Psoas muscle (tissue), 8 donors: ENCODE measurements at regions of chr7 and their contacts with region 1.

Region 1: DNA sequence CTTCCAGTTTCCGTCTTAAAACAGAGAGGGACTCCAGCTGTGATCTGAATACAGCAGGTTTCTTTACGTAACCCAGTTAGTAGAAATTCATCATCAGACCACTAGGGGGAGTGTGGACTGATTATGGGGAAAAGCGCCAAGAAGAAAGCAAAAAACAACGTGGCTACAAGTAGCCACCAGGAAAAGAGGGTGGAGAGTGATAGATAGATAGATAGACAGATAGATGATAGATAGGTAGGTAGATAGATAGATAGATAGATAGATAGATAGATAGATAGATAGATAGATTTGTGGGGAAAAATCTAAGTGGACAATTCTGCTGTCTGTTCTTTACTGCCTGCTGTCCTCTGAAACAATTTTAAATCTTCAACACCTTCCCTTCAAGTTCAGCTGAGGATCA is 12.7 kb upstream of the AKR1B10 start:
- DNase-seq: no peak
- ATAC-seq: peak; percentile 62 to 77 (median 66)
- H3K4me3 ChIP-seq: no peak overlapping the region
- H3K27ac ChIP-seq: peak overlapping the region; percentile 84
- H3K4me1 ChIP-seq: peaks cover 17% of the 10 kb centered on the region
- H3K27me3 ChIP-seq: no peaks in the 10 kb centered on the region
- CTCF ChIP-seq: peak; percentile 84

Region 2: DNA sequence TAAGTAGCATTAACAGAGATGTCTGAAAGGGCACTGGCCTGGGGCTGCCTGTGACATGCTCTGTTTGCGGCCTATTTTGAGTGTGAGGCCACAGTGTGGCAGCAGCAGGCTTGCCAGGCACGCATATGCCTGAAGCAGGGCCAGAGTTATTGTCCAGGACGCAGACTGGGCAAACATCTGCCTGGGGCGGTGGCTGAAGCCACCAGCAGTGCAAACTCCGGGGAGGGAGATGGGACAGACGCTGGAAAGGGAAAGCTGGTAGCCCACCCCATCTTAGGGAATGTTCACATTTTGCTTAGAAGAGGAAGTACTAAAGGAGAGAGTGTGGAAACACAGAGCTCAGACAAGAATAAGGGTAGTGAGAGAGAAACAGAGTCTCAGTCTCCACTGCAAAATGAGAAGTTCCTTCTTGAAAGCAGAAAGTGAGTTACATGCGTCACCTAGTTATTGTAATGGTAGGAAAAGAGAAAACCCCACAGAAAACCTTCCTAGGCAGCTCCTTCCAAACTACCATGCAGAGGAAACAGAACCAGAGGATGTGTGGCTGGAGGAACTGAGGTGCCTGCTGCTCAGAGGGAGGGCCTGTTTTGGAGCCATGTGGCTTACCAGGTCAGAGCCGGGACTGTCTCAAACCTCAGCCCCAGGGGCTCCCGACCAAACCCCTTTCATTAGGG is 70.3 kb before region 1 on chr7:
- intact Hi-C with region 1: loop called in 1 of 2 experiments (anchors 2 kb)
- DNase-seq: peak in 1 of 2 donors; percentile 76
- ATAC-seq: peak; percentile 88 to 95 (median 92)
- H3K4me3 ChIP-seq: no peak overlapping the region
- H3K27ac ChIP-seq: peak overlapping the region; percentile 50
- H3K4me1 ChIP-seq: peaks cover 23% of the 10 kb centered on the region
- H3K27me3 ChIP-seq: no peaks in the 10 kb centered on the region
- CTCF ChIP-seq: peak; percentile 43

Region 3: DNA sequence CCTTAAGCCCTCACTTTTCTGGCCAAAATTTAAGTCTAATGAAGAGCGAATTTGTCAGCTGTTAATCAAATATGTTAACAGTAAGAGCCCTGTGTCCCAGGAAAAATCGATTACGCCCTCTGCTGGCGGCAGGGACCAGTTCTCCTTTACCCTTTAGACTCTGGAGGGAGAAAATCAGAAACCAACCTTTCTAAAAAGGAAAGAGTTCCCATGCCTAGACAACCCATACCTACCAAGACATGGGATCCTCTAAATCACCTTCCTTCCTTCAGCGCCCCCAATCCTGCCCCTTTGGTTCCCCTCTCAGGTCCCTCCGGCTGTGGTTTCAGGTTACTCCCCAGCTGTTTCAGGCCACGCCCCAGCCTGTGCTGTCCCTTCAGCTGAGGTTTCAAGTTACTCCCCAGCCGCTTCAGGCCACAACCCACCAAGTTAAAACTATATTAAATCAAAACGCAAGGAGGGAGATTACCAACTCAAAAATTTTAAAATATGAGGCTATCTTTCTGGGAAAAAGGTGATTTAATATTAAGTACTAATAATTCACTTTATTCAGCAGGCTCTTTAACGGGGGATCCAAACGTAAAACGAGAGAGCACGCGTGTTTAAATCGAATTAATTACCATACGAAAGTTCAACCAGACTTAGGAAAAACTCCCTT is 32.9 kb after region 1 on chr7:
- intact Hi-C with region 1: loop called (anchors 1 to 2 kb)
- DNase-seq: peak; percentile 75 to 88
- ATAC-seq: peak; percentile 80 to 83 (median 81)
- H3K4me3 ChIP-seq: peak overlapping the region; percentile 73
- H3K27ac ChIP-seq: peak overlapping the region; percentile 91
- H3K4me1 ChIP-seq: peaks cover 27% of the 10 kb centered on the region
- H3K27me3 ChIP-seq: no peaks in the 10 kb centered on the region
- CTCF ChIP-seq: peak; percentile 89

Region 4: DNA sequence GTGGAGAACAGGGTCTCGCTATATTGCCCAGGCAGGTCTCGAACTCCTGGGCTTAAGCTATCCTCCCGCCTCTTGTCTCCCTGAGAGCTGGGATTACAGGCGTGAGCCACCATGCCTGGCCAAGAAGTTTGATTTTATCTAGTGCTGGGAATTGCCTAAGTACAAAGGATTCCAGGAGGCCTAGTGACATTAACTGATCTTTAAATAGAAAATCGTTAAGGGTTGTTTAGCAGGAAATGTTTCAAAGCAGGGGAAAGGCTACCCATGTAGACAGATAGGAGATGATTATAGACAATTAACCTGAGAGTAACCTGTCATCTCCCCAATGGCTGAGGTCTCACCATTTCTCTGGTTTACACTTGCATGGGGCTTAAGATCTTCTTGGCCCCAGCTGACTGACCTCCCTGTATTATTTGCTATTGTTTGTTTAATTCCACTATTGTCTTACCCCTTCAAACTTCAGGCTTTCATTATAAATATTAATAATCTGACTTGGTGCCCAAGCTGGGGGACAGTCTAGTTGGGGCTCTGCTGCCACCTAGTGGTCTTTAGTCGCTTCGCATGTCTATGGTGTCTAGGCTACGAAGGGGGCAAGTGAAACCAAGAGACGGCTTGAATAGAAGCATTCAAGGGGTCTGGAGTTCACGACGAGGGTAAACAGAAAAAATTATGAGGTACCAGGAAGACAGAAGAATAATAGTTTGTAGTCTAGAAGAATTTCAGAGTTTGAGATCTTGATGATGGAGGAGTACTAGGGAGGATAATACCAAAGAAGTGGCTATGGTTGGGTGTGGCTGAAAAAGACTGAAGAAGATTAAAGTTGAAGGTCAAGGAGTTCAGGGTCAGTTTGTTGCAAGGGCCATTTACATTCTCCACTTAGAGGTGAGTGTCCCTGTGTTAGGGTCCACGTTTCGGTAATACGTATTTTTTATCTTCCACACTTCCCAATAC is 91.6 kb after region 1 on chr7:
- intact Hi-C with region 1: loop called (anchors 2 to 5 kb)
- DNase-seq: peak; percentile 62 to 67
- ATAC-seq: peak; percentile 87 to 96 (median 90)
- H3K4me3 ChIP-seq: no peak overlapping the region
- H3K27ac ChIP-seq: no peak overlapping the region
- H3K4me1 ChIP-seq: no peaks in the 10 kb centered on the region
- H3K27me3 ChIP-seq: peaks cover 0 to 3% (median 0%) of the 10 kb centered on the region in 3 donors
- CTCF ChIP-seq: peak; percentile 94

Region 5: DNA sequence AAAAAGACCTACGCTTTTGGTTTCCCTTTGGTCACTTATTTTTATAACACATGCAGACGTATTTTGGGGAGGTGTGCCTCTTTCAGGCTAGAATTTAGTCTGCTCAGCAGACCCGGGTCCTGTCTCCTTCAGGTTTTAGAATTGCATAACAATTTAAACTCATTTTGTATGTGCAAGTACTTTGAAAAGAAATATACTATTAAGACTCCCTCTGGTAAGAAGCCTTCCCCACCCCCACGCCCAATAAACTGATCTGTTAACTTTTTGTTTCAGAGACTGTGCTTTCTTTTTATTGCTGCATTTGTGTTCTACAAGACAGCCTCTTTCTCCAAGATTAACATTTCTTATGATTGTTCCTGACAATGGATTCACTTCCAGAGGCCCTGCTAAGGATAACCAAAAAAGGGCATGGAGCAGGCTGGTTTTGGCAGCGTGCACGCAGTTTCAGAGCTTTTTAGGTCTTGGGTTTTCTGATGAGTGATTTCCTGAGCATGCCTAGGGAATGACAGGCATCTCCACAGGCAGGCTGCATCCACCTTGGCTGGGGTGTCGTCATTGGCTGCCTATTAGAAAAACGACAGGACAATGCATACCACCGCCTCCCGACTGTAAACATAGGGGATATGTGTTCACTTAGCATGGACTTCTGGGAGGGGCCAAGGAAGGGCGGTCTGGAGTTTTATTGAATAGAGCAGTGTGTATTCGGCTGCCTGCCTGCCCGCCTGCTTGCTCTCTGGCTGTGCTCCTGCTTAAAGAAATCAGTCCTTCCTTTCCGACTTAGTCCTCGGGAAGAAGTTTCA is 264.5 kb after region 1 on chr7 and contains the start of gene CALD1:
- intact Hi-C with region 1: no loop called
- DNase-seq: peak; percentile 42 to 59
- ATAC-seq: peak; percentile 53 to 81 (median 74)
- H3K4me3 ChIP-seq: peak within 1 kb of the TSS; percentile 66
- H3K27ac ChIP-seq: peak within 1 kb of the TSS; percentile 77
- H3K4me1 ChIP-seq: no peaks in the 10 kb centered on the region
- H3K27me3 ChIP-seq: no peaks in the 10 kb centered on the region
- CTCF ChIP-seq: no peak
- total RNA-seq, gene CALD1: 25.0 to 59.5 (median 33.3) TPM